Endothelial cell of umbilical vein (primary cell): ENCODE measurements at regions of chr13 and their contacts with region 1.

Region 1: DNA sequence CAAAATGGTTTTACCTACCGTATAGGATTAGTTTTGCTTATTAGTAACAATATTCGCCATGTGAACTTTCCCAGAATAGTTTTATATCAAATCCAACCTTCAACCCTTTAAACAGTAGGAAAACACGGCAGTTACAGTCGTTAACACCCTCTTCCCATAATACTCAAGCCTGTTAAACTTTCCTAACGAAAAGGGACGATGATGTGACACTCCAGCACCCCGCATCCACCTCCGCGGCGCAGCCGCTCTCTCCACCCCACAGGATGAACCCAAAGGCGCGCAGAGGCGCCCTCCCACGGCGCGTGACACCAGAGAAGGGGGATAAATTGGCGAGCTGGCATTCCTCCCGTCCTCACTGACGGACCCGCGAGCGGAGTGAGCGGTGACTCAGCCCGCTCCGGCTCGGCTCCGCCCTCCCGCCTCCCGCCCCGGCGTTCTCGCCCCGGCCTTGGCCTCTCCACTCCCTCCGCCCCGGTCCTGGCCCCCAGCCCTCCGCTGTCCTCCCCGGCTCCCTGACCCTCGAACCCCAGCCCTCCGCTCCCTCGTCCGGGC is 665 bp downstream of the TUBGCP3 start:
- DNase-seq: peak; percentile 85
- H3K4me3 ChIP-seq: peak overlapping the region; percentile 87 to 95 (median 93)
- H3K27ac ChIP-seq: peak overlapping the region; percentile 82
- H3K4me1 ChIP-seq: peaks cover 17% of the 10 kb centered on the region
- H3K27me3 ChIP-seq: no peaks in the 10 kb centered on the region
- CTCF ChIP-seq: peak in 1 of 2 donors; percentile 31
- POLR2A ChIP-seq: no peak

Region 2: DNA sequence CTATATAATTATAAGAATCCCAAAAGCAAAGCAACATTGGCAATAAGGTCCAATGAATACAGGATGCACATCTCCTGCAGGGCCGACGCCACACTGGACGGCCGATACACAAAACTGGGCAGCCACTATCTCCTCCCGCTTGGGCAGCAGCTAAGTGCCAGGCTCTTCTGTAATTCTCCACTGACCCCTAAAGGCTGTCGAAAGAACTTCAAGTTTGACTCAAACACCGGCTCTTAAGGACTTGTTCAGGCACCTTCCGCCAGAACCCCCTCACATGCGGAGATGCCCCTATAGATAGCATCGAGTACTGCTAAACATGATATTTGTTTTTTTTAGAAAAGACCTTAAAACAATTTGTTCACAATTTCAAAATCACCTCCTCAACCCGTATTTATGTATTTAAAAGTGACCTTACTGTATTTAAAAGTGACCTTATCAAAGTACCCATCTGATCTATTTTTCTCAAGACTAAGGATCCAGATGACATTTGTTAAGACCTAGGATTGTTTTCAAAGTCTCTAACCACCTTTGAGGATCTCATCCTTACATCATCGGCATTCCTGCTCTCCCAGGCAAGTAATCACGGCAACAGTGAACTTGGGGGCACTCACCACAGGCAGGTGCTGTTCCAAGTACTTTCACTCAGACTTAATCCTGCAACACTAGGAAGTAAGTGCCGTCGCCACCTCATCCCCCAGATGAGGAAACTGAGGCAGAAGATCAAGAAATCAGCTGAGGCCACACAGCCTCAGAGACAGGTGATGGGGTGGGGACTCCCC is 77.1 kb before region 1 on chr13:
- CTCF ChIA-PET with region 1: interaction called, 4 read pairs
- POLR2A ChIA-PET with region 1: no interaction called
- dilution Hi-C with region 1: no loop called
- intact Hi-C with region 1: loop called (anchors 5 kb)
- DNase-seq: peak; percentile 53
- H3K4me3 ChIP-seq: no peak overlapping the region
- H3K27ac ChIP-seq: no peak overlapping the region
- H3K4me1 ChIP-seq: no peaks in the 10 kb centered on the region
- H3K27me3 ChIP-seq: no peaks in the 10 kb centered on the region
- CTCF ChIP-seq: peak; percentile 29 to 58
- POLR2A ChIP-seq: no peak

Region 3: GRCh38 chr13:112558696-112559418 is 28.4 kb before region 1 on chr13:
- CTCF ChIA-PET with region 1: interaction called, 5 read pairs
- POLR2A ChIA-PET with region 1: no interaction called
- dilution Hi-C with region 1: no loop called
- intact Hi-C with region 1: loop called (anchors 1 kb)
- DNase-seq: peak; percentile 95
- H3K4me3 ChIP-seq: peak overlapping the region in 1 of 3 experiments; percentile 15
- H3K27ac ChIP-seq: peak overlapping the region; percentile 86
- H3K4me1 ChIP-seq: peaks cover 22% of the 10 kb centered on the region
- H3K27me3 ChIP-seq: no peaks in the 10 kb centered on the region
- CTCF ChIP-seq: no peak
- POLR2A ChIP-seq: peak; percentile 53

Region 4: DNA sequence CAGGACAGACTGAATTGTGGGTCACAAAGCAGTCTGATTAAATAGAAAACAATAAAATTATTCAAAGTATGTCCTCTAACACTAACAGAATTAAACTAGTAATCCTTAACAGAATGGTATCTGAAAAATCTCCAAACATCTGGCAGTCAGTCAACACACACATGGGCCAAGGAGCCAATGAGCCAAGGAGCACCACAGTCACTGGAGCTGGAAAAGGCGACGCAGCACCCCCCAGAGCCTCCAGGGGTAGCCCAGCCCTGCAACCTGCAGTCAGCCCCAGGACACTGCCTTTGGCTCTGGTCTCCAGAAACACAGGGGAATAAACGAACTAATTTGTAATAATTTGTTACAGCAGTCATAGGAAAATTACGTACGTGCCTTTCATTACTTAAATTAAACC is 11.6 kb before region 1 on chr13:
- CTCF ChIA-PET with region 1: interaction called, 3 read pairs
- POLR2A ChIA-PET with region 1: interaction called, 3 read pairs
- dilution Hi-C with region 1: no loop called
- intact Hi-C with region 1: loop called (anchors 1 kb)
- DNase-seq: peak; percentile 31
- H3K4me3 ChIP-seq: no peak overlapping the region
- H3K27ac ChIP-seq: peak overlapping the region; percentile 89
- H3K4me1 ChIP-seq: peaks cover 35% of the 10 kb centered on the region
- H3K27me3 ChIP-seq: no peaks in the 10 kb centered on the region
- CTCF ChIP-seq: no peak
- POLR2A ChIP-seq: no peak